CD8-positive, alpha-beta T cell (primary cell): ENCODE measurements at regions of chr4 and their contacts with region 1.

Region 1: DNA sequence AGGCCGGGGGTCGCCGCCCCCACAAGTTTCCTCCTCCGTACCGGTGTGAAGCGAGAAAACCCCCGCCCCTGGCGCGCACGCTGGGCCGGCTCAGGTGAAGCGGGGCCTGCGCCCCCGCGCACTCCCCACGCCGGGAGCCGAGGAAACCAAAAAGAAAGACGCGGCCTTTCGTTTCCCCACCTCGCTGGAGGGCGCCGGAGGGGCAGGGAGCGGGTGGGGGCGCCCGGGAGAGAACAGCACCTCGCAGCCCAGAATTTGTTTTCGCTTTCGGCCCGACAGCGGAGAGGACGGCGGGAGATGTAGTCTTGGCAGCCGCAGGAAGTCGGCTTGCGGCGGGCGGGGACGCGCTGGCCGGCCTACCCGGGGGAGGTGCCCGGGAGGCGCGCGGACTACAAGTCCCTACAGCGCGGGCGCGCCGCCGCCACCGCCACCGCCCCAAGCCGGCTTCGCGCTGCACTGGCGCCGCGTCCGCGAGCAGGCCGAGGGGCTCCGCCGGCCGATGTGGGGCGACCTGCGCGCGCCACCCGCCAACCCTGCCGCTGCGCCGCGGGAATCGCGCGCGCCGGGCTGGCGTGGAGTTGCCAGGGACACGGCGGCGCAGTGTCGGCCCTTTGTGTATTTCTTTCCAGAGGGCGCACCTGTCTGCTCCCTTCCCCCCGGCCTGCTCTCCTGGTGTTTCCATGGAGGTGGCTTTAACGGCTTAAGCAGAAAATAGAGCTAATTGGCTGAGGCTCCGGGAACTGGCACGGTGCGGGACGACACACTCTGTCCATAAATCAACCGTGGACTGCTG is at the start of gene OTUD4:
- DNase-seq: peak; percentile 91 to 98 (median 94)
- ATAC-seq: peak; percentile 82
- H3K4me3 ChIP-seq: peak within 1 kb of the TSS; percentile 69 to 79
- H3K4me3 Mint-ChIP-seq: peak within 1 kb of the TSS; percentile 93
- H3K27ac ChIP-seq: peak within 1 kb of the TSS; percentile 87 to 94
- H3K27ac Mint-ChIP-seq: peak within 1 kb of the TSS; percentile 96
- H3K4me1 ChIP-seq: peaks cover 27% of the 10 kb centered on the region
- H3K4me1 Mint-ChIP-seq: peaks cover 41% of the 10 kb centered on the region
- H3K27me3 ChIP-seq: no peaks in the 10 kb centered on the region
- H3K27me3 Mint-ChIP-seq: no peaks in the 10 kb centered on the region
- CTCF ChIP-seq: no peak
- total RNA-seq, gene OTUD4: 67.5 to 70.6 TPM

Region 2: DNA sequence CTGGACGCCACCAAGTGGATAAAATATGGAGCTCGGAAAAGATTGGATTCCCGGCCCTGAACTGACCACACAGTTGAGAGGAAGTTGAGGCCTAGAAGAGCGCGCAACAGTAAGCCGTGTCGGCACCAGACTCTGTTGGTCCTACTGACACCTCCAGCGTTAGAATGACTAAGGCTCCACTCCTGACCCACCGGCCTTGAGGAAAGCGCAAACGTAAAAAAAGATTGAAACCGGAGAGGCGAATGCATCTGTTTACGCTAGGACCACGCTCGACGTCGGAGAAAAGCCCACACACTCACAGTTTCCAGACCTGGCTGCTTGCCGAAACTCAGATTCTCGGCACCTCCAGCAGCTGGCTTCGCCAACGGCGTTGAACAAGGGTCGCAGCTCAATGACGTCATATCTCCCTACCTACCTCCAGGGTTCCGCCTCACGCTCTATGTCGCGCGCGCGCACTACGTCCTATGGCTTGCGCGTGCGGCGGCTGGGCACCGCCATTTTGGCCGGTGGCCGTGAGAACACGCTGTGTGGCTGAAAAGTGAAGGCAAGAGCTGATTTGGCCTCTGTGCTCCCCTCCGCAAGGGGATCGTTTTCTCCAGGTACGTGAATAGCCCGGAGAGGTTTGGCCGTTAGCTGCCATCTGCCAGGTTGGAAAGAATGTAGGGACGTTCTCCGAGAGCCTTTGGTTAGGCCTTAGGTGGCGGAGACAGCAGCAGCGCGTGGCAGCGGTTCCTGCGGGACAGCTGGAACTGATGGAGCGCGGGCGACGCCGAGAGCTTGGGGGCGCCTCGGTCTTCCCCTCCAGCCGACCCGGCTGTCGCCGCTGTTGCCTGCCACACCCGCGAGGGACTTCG is 82.4 kb before region 1 on chr4 and contains the starts of genes ABCE1 and ANAPC10:
- CTCF ChIA-PET with region 1: interaction called, 3 read pairs
- POLR2A ChIA-PET with region 1: interaction called, 29 read pairs
- intact Hi-C with region 1: loop called (anchors 1 kb)
- DNase-seq: peak; percentile 84 to 99 (median 97)
- ATAC-seq: peak; percentile 89
- H3K4me3 ChIP-seq: peak within 1 kb of the TSS; percentile 70 to 81
- H3K4me3 Mint-ChIP-seq: peak within 1 kb of the TSS; percentile 95
- H3K27ac ChIP-seq: peak within 1 kb of the TSS; percentile 88 to 91
- H3K27ac Mint-ChIP-seq: peak within 1 kb of the TSS; percentile 98
- H3K4me1 ChIP-seq: peaks cover 41% of the 10 kb centered on the region
- H3K4me1 Mint-ChIP-seq: peaks cover 46% of the 10 kb centered on the region
- H3K27me3 ChIP-seq: no peaks in the 10 kb centered on the region
- H3K27me3 Mint-ChIP-seq: no peaks in the 10 kb centered on the region
- CTCF ChIP-seq: no peak
- total RNA-seq, gene ABCE1: 68.8 to 70.9 TPM
- total RNA-seq, gene ANAPC10: 24.5 to 26.7 TPM

Region 3: DNA sequence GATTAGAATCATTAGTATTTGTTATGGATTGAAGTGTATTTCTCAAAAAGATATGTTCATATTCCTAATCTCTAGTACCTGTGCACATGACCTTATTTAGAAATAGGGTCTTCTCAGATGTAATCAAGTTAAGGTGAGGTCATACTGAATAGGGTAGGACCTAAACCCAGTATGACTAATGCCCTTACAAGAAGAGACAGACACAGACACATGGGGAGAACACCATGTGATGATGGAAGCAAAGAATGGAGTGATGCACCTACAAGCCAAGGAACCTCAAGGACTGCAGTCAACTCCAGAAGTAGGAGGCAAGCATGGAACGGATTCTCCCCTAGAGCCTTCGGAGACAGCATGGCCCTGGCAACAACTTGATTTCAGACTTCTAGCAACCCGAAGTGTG is 31.5 kb before region 1 on chr4:
- CTCF ChIA-PET with region 1: no interaction called
- POLR2A ChIA-PET with region 1: no interaction called
- intact Hi-C with region 1: loop called in 1 of 2 experiments (anchors 5 kb)
- DNase-seq: no peak
- ATAC-seq: no peak
- H3K4me3 ChIP-seq: no peak overlapping the region
- H3K4me3 Mint-ChIP-seq: no peak overlapping the region
- H3K27ac ChIP-seq: no peak overlapping the region
- H3K27ac Mint-ChIP-seq: no peak overlapping the region
- H3K4me1 ChIP-seq: no peaks in the 10 kb centered on the region
- H3K4me1 Mint-ChIP-seq: peaks cover 4% of the 10 kb centered on the region
- H3K27me3 ChIP-seq: no peaks in the 10 kb centered on the region
- H3K27me3 Mint-ChIP-seq: no peaks in the 10 kb centered on the region
- CTCF ChIP-seq: no peak

Region 4: GRCh38 chr4:145618932-145619638 is 438.6 kb after region 1 on chr4 and contains the start of gene MMAA:
- CTCF ChIA-PET with region 1: interaction called, 3 read pairs
- POLR2A ChIA-PET with region 1: interaction called, 6 read pairs
- intact Hi-C with region 1: loop called (anchors 1 kb)
- DNase-seq: peak; percentile 86 to 97 (median 94)
- ATAC-seq: peak; percentile 93
- H3K4me3 ChIP-seq: peak within 1 kb of the TSS; percentile 89 to 97
- H3K4me3 Mint-ChIP-seq: peak within 1 kb of the TSS; percentile 96
- H3K27ac ChIP-seq: peak within 1 kb of the TSS; percentile 91 to 97
- H3K27ac Mint-ChIP-seq: peak within 1 kb of the TSS; percentile 98
- H3K4me1 ChIP-seq: peaks cover 22% of the 10 kb centered on the region
- H3K4me1 Mint-ChIP-seq: peaks cover 45% of the 10 kb centered on the region
- H3K27me3 ChIP-seq: no peaks in the 10 kb centered on the region
- H3K27me3 Mint-ChIP-seq: no peaks in the 10 kb centered on the region
- CTCF ChIP-seq: peak; percentile 38
- total RNA-seq, gene MMAA: 7.6 to 9.4 TPM

Region 5: DNA sequence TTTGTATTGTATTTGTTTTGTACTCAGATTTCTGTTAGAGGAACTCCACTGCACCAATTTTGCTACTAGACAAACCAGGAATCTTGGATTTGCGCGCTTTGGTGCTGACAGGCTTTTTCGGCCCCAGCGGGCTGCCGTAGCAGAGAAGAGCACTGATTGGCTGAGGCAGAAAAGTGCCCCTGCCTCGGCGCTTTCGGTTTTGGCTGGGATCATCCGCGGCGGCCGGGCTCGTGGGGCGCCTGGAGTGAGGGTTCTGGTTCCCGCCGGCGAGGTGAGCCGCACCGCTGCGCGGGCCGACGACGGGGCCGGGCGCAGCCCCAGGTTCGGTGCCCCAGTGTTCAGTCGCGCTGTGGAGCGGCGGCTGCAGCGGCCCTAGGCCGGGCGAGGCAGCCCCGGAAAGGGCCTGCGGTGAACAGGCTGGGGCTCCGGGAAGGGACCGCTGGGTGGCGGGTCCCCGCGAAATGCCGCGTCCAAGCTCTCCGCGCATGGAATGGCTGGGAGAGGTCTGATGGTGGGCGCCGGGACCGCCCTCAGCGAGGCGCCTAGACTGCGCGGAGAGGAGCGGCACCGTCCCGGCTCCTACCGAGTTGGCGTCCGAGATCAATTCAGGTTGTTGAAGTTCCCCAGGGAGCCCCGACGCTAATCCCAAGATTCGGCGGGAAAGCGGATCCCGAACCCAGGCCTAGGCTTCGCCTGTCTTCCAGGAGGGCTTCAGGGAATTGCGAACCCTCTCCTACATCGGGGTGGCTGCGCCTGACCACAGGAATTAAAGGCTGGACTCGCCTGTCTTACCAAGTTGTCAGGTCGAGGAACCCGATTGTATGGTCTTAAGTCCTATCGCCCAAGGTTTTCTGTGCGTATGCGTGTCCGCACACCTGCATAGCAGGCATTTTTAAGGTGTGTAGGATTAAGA is 995.3 kb after region 1 on chr4 and contains the start of gene LSM6:
- CTCF ChIA-PET with region 1: no interaction called
- POLR2A ChIA-PET with region 1: no interaction called
- intact Hi-C with region 1: loop called in 1 of 2 experiments (anchors 5 kb)
- DNase-seq: peak; percentile 60 to 92 (median 79)
- ATAC-seq: peak; percentile 90
- H3K4me3 ChIP-seq: peak within 1 kb of the TSS; percentile 88 to 97
- H3K4me3 Mint-ChIP-seq: peak within 1 kb of the TSS; percentile 91
- H3K27ac ChIP-seq: peak within 1 kb of the TSS; percentile 69 to 83
- H3K27ac Mint-ChIP-seq: peak within 1 kb of the TSS; percentile 95
- H3K4me1 ChIP-seq: peaks cover 48% of the 10 kb centered on the region
- H3K4me1 Mint-ChIP-seq: peaks cover 59% of the 10 kb centered on the region
- H3K27me3 ChIP-seq: no peaks in the 10 kb centered on the region
- H3K27me3 Mint-ChIP-seq: no peaks in the 10 kb centered on the region
- CTCF ChIP-seq: no peak
- total RNA-seq, gene LSM6: 17.6 to 20.6 TPM